CD4-positive, alpha-beta memory T cell (primary cell): ENCODE measurements at regions of chr1 and their contacts with region 1.

Region 1: GRCh38 chr1:172895050-172895460 is 155.7 kb downstream of the TNFSF18 start:
- DNase-seq: peak in 4 of 5 donors; percentile 26 to 45 (median 38)
- H3K4me3 ChIP-seq: peak overlapping the region; percentile 12 to 52
- H3K4me3 Mint-ChIP-seq: peak overlapping the region; percentile 64 to 88 (median 79)
- H3K27ac ChIP-seq: peak overlapping the region; percentile 19
- H3K27ac Mint-ChIP-seq: peak overlapping the region; percentile 70 to 96 (median 84)
- H3K4me1 ChIP-seq: peaks cover 29% of the 10 kb centered on the region
- H3K4me1 Mint-ChIP-seq: peaks cover 26 to 31% (median 28%) of the 10 kb centered on the region in 4 donors
- H3K27me3 ChIP-seq: no peaks in the 10 kb centered on the region
- H3K27me3 Mint-ChIP-seq: no peaks in the 10 kb centered on the region

Region 2: GRCh38 chr1:172837816-172838680 is 57.0 kb before region 1 on chr1:
- CTCF ChIA-PET with region 1: interaction called, 4 read pairs
- POLR2A ChIA-PET with region 1: interaction called, 19 read pairs
- intact Hi-C with region 1: loop called (anchors 5 kb)
- DNase-seq: peak; percentile 77 to 88 (median 83)
- H3K4me3 ChIP-seq: no peak overlapping the region
- H3K4me3 Mint-ChIP-seq: peak overlapping the region; percentile 9 to 76 (median 58)
- H3K27ac ChIP-seq: no peak overlapping the region
- H3K27ac Mint-ChIP-seq: peak overlapping the region; percentile 39 to 91 (median 78)
- H3K4me1 ChIP-seq: peaks cover 22% of the 10 kb centered on the region
- H3K4me1 Mint-ChIP-seq: peaks cover 13 to 43% (median 25%) of the 10 kb centered on the region in 4 donors
- H3K27me3 ChIP-seq: no peaks in the 10 kb centered on the region
- H3K27me3 Mint-ChIP-seq: no peaks in the 10 kb centered on the region

Region 3: DNA sequence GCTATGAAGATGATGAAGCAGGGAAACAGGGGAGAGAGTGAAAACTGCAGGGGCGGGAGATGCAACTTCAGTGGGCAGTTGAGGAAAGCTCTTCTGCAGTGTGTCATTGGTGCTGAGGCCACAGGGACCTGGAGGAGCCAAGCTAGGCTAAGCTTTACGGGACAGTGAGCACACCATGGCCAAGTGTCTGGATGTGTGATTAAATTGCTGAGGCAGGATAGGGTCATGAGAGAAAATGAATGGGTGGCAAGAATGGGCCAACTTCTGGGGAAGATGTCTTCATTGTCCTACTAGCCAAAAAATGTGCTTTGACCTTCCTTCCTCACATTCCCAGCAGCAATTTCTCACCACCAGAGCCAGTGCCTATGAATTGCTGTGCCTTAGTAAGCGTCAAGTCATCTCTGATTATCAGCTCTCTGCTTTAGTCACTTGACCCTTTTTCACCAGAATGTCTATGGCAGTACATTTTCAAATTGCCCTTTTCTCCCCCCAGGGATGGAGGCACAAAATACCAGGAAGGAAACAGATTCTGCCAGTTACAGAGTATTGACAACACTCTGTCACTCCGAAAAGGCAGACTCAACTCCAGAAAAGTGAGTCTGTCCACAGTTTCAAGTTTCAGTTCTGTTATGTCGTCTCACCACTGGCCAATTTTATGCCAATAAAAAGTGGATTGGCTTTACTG is 11.8 kb before region 1 on chr1:
- CTCF ChIA-PET with region 1: interaction called, 3 read pairs
- POLR2A ChIA-PET with region 1: interaction called, 19 read pairs
- intact Hi-C with region 1: loop called (anchors 1 kb)
- DNase-seq: no peak
- H3K4me3 ChIP-seq: no peak overlapping the region
- H3K4me3 Mint-ChIP-seq: peak overlapping the region; percentile 6 to 78 (median 54)
- H3K27ac ChIP-seq: no peak overlapping the region
- H3K27ac Mint-ChIP-seq: peak overlapping the region in 2 of 7 donors; percentile 13 to 19
- H3K4me1 ChIP-seq: peaks cover 17% of the 10 kb centered on the region
- H3K4me1 Mint-ChIP-seq: peaks cover 8 to 16% (median 12%) of the 10 kb centered on the region in 4 donors
- H3K27me3 ChIP-seq: no peaks in the 10 kb centered on the region
- H3K27me3 Mint-ChIP-seq: peaks cover 0 to 5% of the 10 kb centered on the region in 2 donors

Region 4: GRCh38 chr1:172906778-172907592 is 11.9 kb after region 1 on chr1:
- CTCF ChIA-PET with region 1: interaction called, 5 read pairs
- POLR2A ChIA-PET with region 1: interaction called, 43 read pairs
- intact Hi-C with region 1: no loop called
- DNase-seq: peak; percentile 36 to 52 (median 49)
- H3K4me3 ChIP-seq: no peak overlapping the region
- H3K4me3 Mint-ChIP-seq: peak overlapping the region in 7 of 8 donors; percentile 3 to 66 (median 44)
- H3K27ac ChIP-seq: no peak overlapping the region
- H3K27ac Mint-ChIP-seq: peak overlapping the region; percentile 5 to 86 (median 70)
- H3K4me1 ChIP-seq: peaks cover 22% of the 10 kb centered on the region
- H3K4me1 Mint-ChIP-seq: peaks cover 24 to 34% (median 28%) of the 10 kb centered on the region in 4 donors
- H3K27me3 ChIP-seq: no peaks in the 10 kb centered on the region
- H3K27me3 Mint-ChIP-seq: no peaks in the 10 kb centered on the region

Region 5: GRCh38 chr1:172931761-172932160 is 36.7 kb after region 1 on chr1:
- CTCF ChIA-PET with region 1: no interaction called
- POLR2A ChIA-PET with region 1: no interaction called
- intact Hi-C with region 1: no loop called
- DNase-seq: no peak
- H3K4me3 ChIP-seq: no peak overlapping the region
- H3K4me3 Mint-ChIP-seq: no peak overlapping the region
- H3K27ac ChIP-seq: no peak overlapping the region
- H3K27ac Mint-ChIP-seq: no peak overlapping the region
- H3K4me1 ChIP-seq: peaks cover 16% of the 10 kb centered on the region
- H3K4me1 Mint-ChIP-seq: peaks cover 12 to 26% (median 15%) of the 10 kb centered on the region in 4 donors
- H3K27me3 ChIP-seq: no peaks in the 10 kb centered on the region
- H3K27me3 Mint-ChIP-seq: no peaks in the 10 kb centered on the region

Region 6: GRCh38 chr1:172960454-172961208 is 65.6 kb after region 1 on chr1:
- CTCF ChIA-PET with region 1: no interaction called
- POLR2A ChIA-PET with region 1: no interaction called
- intact Hi-C with region 1: no loop called
- DNase-seq: no peak
- H3K4me3 ChIP-seq: no peak overlapping the region
- H3K4me3 Mint-ChIP-seq: no peak overlapping the region
- H3K27ac ChIP-seq: no peak overlapping the region
- H3K27ac Mint-ChIP-seq: no peak overlapping the region
- H3K4me1 ChIP-seq: no peaks in the 10 kb centered on the region
- H3K4me1 Mint-ChIP-seq: peaks cover 0 to 3% (median under 1%) of the 10 kb centered on the region in 4 donors
- H3K27me3 ChIP-seq: no peaks in the 10 kb centered on the region
- H3K27me3 Mint-ChIP-seq: no peaks in the 10 kb centered on the region